Endothelial cell of umbilical vein (primary cell): ENCODE measurements at regions of chr5 and their contacts with region 1.

Region 1: DNA sequence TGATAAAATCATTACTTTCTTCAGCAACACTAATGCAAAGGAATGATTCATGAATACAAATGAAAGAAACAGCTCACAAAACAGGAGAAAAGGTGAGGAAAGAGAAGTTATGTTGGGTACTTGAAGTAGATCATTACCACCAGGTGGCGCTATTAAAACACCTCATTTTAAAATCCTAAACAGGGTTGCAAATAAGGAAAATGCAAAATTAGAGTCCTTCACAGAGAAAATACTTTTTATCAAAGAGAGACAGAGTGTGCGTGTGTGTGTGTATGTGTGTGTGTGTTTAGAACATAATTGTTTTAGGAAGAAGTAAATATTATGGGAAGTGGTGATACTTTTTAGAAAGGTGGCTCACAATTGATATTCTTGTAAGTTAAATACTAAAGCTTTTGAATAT is 49.5 kb upstream of the CD180 start:
- DNase-seq: peak; percentile 77
- H3K4me3 ChIP-seq: no peak overlapping the region
- H3K27ac ChIP-seq: no peak overlapping the region
- H3K4me1 ChIP-seq: peaks cover 33% of the 10 kb centered on the region
- H3K27me3 ChIP-seq: no peaks in the 10 kb centered on the region
- CTCF ChIP-seq: peak; percentile 34 to 35
- POLR2A ChIP-seq: no peak

Region 2: GRCh38 chr5:66952153-66952552 is 294.0 kb before region 1 on chr5:
- CTCF ChIA-PET with region 1: no interaction called
- POLR2A ChIA-PET with region 1: no interaction called
- dilution Hi-C with region 1: no loop called
- intact Hi-C with region 1: no loop called
- DNase-seq: no peak
- H3K4me3 ChIP-seq: no peak overlapping the region
- H3K27ac ChIP-seq: no peak overlapping the region
- H3K4me1 ChIP-seq: no peaks in the 10 kb centered on the region
- H3K27me3 ChIP-seq: no peaks in the 10 kb centered on the region
- CTCF ChIP-seq: no peak
- POLR2A ChIP-seq: no peak

Region 3: GRCh38 chr5:67032921-67033664 is 213.0 kb before region 1 on chr5:
- CTCF ChIA-PET with region 1: no interaction called
- POLR2A ChIA-PET with region 1: no interaction called
- dilution Hi-C with region 1: no loop called
- intact Hi-C with region 1: no loop called
- DNase-seq: no peak
- H3K4me3 ChIP-seq: no peak overlapping the region
- H3K27ac ChIP-seq: no peak overlapping the region
- H3K4me1 ChIP-seq: peaks cover 51% of the 10 kb centered on the region
- H3K27me3 ChIP-seq: no peaks in the 10 kb centered on the region
- CTCF ChIP-seq: no peak
- POLR2A ChIP-seq: no peak

Region 4: GRCh38 chr5:67095346-67096171 is 150.5 kb before region 1 on chr5:
- CTCF ChIA-PET with region 1: no interaction called
- POLR2A ChIA-PET with region 1: no interaction called
- dilution Hi-C with region 1: no loop called
- intact Hi-C with region 1: no loop called
- DNase-seq: peak; percentile 78
- H3K4me3 ChIP-seq: no peak overlapping the region
- H3K27ac ChIP-seq: no peak overlapping the region
- H3K4me1 ChIP-seq: peaks cover 17% of the 10 kb centered on the region
- H3K27me3 ChIP-seq: no peaks in the 10 kb centered on the region
- CTCF ChIP-seq: no peak
- POLR2A ChIP-seq: no peak

Region 5: DNA sequence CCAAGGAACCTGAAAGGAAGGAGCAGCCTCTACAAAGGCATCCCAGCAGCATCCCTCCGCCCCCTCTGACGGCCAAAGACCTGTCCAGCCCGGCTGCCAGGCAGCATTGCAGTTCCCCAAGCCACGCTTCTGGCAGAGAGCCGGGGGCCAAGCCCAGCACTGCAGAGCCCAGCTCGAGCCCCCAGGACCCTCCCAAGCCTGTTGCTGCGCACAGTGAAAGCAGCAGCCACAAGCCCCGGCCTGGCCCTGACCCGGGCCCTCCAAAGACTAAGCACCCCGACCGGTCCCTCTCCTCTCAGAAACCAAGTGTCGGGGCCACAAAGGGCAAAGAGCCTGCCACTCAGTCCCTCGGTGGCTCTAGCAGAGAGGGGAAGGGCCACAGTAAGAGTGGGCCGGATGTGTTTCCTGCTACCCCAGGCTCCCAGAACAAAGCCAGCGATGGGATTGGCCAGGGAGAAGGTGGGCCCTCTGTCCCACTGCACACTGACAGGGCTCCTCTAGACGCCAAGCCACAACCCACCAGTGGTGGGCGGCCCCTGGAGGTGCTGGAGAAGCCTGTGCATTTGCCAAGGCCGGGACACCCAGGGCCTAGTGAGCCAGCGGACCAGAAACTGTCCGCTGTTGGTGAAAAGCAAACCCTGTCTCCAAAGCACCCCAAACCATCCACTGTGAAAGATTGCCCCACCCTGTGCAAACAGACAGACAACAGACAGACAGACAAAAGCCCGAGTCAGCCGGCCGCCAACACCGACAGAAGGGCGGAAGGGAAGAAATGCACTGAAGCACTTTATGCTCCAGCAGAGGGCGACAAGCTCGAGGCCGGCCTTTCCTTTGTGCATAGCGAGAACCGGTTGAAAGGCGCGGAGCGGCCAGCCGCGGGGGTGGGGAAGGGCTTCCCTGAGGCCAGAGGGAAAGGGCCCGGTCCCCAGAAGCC is 80.3 kb before region 1 on chr5:
- CTCF ChIA-PET with region 1: interaction called, 12 read pairs
- POLR2A ChIA-PET with region 1: no interaction called
- dilution Hi-C with region 1: no loop called
- intact Hi-C with region 1: no loop called
- DNase-seq: peak; percentile 74
- H3K4me3 ChIP-seq: no peak overlapping the region
- H3K27ac ChIP-seq: peak overlapping the region; percentile 42
- H3K4me1 ChIP-seq: peaks cover 8% of the 10 kb centered on the region
- H3K27me3 ChIP-seq: no peaks in the 10 kb centered on the region
- CTCF ChIP-seq: peak; percentile 74 to 88
- POLR2A ChIP-seq: no peak

Region 6: GRCh38 chr5:67404256-67405100 is 158.4 kb after region 1 on chr5:
- CTCF ChIA-PET with region 1: interaction called, 11 read pairs
- POLR2A ChIA-PET with region 1: no interaction called
- dilution Hi-C with region 1: no loop called
- intact Hi-C with region 1: loop called (anchors 2 kb)
- DNase-seq: peak; percentile 90
- H3K4me3 ChIP-seq: no peak overlapping the region
- H3K27ac ChIP-seq: peak overlapping the region; percentile 100
- H3K4me1 ChIP-seq: peaks cover 35% of the 10 kb centered on the region
- H3K27me3 ChIP-seq: no peaks in the 10 kb centered on the region
- CTCF ChIP-seq: no peak
- POLR2A ChIP-seq: no peak

Region 7: DNA sequence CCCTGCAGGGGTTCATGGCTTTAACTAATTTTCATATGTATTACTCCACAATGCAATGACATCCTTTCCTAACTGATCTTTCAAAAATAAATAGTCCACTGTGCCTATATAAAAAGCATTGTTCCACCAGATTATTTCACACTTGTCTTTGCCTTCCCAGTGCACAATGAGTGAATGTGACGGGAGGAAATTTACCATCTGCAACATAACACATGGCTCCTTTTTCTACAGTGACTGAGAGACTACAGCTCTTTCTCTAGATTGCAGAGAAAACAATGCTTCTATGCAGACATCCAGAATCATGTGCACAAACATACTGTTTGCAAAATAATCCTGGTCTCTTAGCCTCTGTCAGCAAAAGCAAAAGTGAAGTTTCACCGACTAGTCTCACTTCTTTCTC is 485.8 kb after region 1 on chr5:
- CTCF ChIA-PET with region 1: interaction called, 6 read pairs
- POLR2A ChIA-PET with region 1: no interaction called
- dilution Hi-C with region 1: no loop called
- intact Hi-C with region 1: loop called (anchors 5 kb)
- DNase-seq: no peak
- H3K4me3 ChIP-seq: no peak overlapping the region
- H3K27ac ChIP-seq: no peak overlapping the region
- H3K4me1 ChIP-seq: peaks cover 32% of the 10 kb centered on the region
- H3K27me3 ChIP-seq: no peaks in the 10 kb centered on the region
- CTCF ChIP-seq: no peak
- POLR2A ChIP-seq: no peak

Region 8: GRCh38 chr5:67998709-67999261 is 752.7 kb after region 1 on chr5:
- CTCF ChIA-PET with region 1: no interaction called
- POLR2A ChIA-PET with region 1: no interaction called
- dilution Hi-C with region 1: no loop called
- intact Hi-C with region 1: loop called (anchors 5 kb)
- DNase-seq: peak; percentile 82
- H3K4me3 ChIP-seq: no peak overlapping the region
- H3K27ac ChIP-seq: peak overlapping the region; percentile 85
- H3K4me1 ChIP-seq: peaks cover 14% of the 10 kb centered on the region
- H3K27me3 ChIP-seq: no peaks in the 10 kb centered on the region
- CTCF ChIP-seq: no peak
- POLR2A ChIP-seq: peak; percentile 23

Region 9: GRCh38 chr5:68258531-68258930 is 1012.4 kb after region 1 on chr5:
- CTCF ChIA-PET with region 1: interaction called, 222 read pairs
- POLR2A ChIA-PET with region 1: no interaction called
- dilution Hi-C with region 1: no loop called
- intact Hi-C with region 1: no loop called
- DNase-seq: no peak
- H3K4me3 ChIP-seq: no peak overlapping the region
- H3K27ac ChIP-seq: no peak overlapping the region
- H3K4me1 ChIP-seq: peaks cover 2% of the 10 kb centered on the region
- H3K27me3 ChIP-seq: no peaks in the 10 kb centered on the region
- CTCF ChIP-seq: no peak
- POLR2A ChIP-seq: no peak